Esophagus squamous epithelium (tissue), 5 donors: ENCODE measurements at regions of chr7 and their contacts with region 1.

Region 1: DNA sequence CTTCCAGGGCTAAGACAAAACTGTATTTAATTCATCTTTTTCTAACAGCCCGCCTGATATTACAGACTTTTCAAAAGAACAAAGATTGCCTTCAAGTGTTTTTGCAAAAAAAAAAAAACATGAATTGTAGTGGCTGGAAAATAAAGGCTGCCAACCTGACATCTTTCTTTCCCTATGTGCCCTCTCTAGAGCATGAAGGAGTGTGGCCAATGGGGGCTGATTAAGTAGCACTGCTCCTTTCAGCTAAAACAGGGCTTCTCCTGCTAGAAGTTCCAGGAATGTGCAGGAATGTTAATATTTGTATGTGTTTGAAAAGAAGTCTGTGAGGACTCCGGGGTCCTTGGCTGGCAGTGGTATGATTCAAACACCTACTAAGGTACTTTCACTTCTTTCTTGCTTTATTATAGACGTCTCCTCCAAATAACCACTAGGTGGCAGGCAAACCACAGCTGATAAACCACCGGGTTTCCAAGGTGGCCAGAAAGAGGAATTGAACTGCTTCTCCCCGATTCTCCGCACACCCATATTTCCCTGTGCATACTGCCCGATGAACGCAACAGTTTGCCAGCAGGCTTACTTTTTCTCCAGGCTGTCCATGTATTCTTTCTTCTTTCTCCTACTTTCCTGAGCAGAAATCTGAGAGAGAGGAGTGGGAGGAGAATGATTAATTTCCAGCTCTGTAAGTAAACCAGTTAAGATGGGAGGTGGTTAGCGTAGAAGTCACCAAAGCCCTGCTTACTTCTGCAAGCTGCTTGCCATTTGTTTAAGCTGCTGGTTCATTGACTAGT is 56.8 kb upstream of the DGKI start:
- DNase-seq: no peak
- H3K4me3 ChIP-seq: no peak overlapping the region
- H3K27ac ChIP-seq: peak overlapping the region in 1 of 4 donors; percentile 31
- H3K4me1 ChIP-seq: peaks cover 5 to 27% (median 7%) of the 10 kb centered on the region in 3 donors
- H3K27me3 ChIP-seq: no peaks in the 10 kb centered on the region
- CTCF ChIP-seq: peak; percentile 64 to 86 (median 86)
- POLR2A ChIP-seq: no peak

Region 2: GRCh38 chr7:137656227-137656849 is 247.2 kb before region 1 on chr7:
- intact Hi-C with region 1: loop called (anchors 5 kb)
- DNase-seq: no peak
- H3K4me3 ChIP-seq: no peak overlapping the region
- H3K27ac ChIP-seq: no peak overlapping the region
- H3K4me1 ChIP-seq: peaks cover 0 to 19% (median 3%) of the 10 kb centered on the region in 3 donors
- H3K27me3 ChIP-seq: no peaks in the 10 kb centered on the region
- CTCF ChIP-seq: peak in 5 of 6 experiments; percentile 71 to 83 (median 83)
- POLR2A ChIP-seq: no peak

Region 3: DNA sequence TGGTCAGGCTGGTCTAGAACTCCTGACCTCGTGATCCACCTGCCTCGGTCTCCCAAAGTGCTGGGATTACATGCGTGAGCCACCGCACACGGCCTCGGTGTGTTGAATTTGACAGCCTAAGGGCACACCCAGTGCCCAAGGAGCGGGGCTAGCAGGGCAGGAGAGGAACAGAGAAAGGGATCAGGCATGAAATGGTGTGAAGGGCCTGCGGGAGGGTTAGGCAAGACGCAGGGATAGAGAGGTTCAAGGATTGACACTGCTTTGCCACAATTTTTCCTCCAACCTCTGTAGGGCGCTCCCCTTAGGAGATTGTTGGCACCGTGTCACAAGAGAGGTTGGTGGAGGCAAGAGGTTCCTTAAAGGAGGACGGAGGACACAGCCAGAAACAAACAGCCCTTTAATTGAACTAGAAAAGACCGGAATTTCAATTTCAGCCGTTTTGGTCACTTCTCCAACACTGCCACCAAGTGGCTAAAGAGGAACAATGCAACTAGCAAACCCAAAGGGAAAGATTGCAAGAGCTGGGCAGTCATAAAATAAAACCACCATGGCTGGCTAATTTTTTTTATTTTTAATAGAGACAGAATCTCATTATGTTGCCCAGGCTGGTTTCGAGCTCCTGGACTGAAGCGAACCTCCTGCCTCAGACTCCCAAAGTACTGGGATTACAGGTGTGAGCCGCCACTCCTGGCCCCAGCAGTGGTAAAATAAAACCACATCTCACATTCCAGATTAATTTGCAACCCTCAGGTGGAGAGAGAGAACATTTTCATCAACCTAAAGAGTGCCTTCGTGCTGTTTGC is 105.2 kb after region 1 on chr7:
- intact Hi-C with region 1: loop called (anchors 2 kb)
- DNase-seq: no peak
- H3K4me3 ChIP-seq: peak overlapping the region in 1 of 4 donors; percentile 9
- H3K27ac ChIP-seq: peak overlapping the region in 2 of 4 donors; percentile 21 to 28
- H3K4me1 ChIP-seq: peaks cover 0 to 16% (median 0%) of the 10 kb centered on the region in 3 donors
- H3K27me3 ChIP-seq: no peaks in the 10 kb centered on the region
- CTCF ChIP-seq: peak; percentile 86 to 92 (median 90)
- POLR2A ChIP-seq: no peak